B cell (primary cell): ENCODE measurements at regions of chr2 and their contacts with region 1.

Region 1: DNA sequence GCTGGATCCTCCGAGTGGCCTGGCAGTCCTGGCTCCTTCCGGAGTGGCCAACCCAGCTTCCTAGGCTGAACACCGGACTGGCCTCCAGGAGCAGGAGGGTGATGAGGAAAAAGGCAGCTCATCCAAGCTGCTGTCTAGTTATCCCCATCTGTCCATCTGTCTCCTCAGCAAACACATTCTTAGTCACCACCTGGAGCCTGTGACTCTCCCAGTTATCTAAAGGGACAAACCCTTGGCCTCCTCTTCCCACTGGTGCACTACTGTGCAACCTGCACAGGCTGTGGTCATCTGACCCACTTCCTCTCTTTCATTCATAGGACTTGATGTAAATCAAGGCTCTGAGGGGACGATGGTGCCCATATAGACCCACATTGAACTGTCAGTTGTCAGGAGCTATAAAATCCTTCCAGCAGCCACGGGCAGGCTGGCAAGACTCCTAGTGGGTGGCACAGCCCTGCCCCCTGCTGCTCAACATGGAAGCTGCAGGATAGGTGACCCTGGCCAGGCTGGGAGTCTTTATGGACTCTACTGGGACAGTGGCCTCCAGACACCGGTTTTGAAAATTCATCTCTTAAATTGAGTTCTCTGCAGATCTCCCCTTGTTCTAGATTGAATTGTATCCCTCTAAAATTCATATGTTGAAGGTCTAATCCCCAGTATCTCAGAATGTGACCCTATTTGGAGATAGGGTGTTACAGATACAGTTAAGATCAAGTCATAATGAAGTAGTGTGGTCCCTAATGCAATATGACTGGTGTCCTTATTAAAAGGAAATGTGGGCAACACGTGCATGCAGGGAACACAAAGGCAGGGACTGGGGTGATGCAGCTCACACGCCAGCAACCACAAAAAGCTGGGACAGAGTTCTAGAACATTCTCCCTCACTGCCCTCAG is 29.3 kb upstream of the DUSP2 start:
- DNase-seq: peak; percentile 85
- ATAC-seq: peak; percentile 99
- H3K4me3 ChIP-seq: no peak overlapping the region
- H3K4me3 Mint-ChIP-seq: no peak overlapping the region
- H3K27ac ChIP-seq: no peak overlapping the region
- H3K27ac Mint-ChIP-seq: no peak overlapping the region
- H3K4me1 ChIP-seq: peaks cover 0 to 3% of the 10 kb centered on the region in 2 donors
- H3K4me1 Mint-ChIP-seq: peaks cover 7% of the 10 kb centered on the region
- H3K27me3 ChIP-seq: no peaks in the 10 kb centered on the region
- H3K27me3 Mint-ChIP-seq: no peaks in the 10 kb centered on the region
- CTCF ChIP-seq: peak; percentile 99

Region 2: DNA sequence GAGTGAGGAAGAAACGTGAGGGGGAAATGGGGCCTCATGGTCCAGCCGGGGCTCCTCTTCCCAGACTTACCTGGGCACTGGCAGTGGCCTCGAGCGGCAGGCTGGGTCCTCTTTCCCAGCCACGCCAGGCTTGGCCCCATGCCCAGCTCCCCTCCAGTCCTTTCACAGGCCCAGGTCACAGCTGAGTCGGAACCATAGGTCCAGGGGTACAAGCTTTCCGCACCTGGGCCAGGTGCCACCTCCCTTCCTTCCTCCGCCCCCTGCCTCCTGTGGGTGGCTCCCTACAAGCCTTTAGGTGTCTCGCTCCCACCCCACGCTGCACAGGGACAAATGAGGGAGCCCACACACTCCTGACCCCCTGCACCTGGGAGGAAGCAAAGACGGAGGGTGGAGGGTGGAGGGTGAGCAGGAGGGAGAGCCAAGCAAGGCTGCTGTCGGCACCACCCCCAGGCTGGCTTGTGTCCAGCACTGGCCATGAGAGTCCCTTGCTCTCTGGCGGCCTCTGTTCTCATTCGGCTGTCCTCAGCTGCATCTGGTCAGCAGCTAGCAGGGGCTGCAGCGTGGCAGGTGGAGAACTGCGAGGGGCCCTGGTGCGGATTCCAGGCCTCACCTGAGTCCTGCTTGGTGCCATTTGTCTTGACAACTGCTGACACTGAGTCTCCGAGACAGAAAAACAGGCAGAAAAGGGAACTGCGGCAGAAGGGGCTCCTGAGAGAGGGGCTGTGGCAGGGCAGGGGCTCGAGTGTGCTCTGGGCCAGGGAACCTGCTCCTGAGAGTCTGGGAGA is 84.9 kb before region 1 on chr2:
- CTCF ChIA-PET with region 1: no interaction called
- POLR2A ChIA-PET with region 1: no interaction called
- intact Hi-C with region 1: no loop called
- DNase-seq: no peak
- ATAC-seq: no peak
- H3K4me3 ChIP-seq: no peak overlapping the region
- H3K4me3 Mint-ChIP-seq: no peak overlapping the region
- H3K27ac ChIP-seq: no peak overlapping the region
- H3K27ac Mint-ChIP-seq: no peak overlapping the region
- H3K4me1 ChIP-seq: no peaks in the 10 kb centered on the region
- H3K4me1 Mint-ChIP-seq: no peaks in the 10 kb centered on the region
- H3K27me3 ChIP-seq: peaks cover 0 to 8% (median 2%) of the 10 kb centered on the region in 4 experiments
- H3K27me3 Mint-ChIP-seq: peaks cover 21% of the 10 kb centered on the region
- CTCF ChIP-seq: no peak

Region 3: DNA sequence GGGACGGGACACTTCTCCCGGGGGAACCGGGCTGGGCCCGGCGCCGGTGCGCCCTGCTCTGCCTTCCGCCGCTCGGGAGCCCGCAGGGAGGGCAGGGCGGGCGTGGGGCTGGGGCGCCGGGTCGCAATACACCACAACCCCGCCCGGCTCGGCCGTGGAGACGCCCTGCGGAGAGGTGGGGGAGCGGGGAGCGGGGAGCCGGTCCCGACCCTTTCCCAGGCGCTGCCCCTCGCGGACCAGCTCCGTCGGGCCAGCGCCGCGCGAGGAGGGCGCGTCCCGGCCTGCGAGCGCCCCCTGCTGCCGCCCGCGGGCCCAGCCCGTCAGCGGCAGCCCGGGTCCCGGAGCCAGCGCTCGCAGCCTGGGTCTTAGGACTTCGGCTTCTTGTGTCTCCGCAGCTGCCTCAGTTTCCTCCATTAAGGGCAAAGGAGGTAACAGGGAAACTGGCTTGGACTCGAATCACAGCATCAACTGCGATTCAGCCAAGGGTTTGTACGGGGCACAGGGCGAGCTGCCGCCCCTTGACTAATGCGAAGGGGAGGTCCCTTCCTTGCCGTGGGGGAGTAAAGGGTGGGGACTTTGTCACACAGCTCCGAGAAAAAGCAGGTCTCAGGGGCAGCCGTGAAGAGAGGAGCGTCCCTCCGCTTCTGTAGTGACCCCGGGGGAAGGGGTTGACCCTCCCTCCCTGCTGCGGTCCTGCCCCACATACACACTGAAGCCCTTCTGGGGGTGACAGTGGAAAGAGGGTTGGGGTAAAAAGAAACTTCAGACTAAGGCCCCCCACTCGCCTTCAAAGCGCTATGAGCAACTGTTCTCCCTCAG is 57.4 kb before region 1 on chr2:
- CTCF ChIA-PET with region 1: interaction called, 27 read pairs
- POLR2A ChIA-PET with region 1: no interaction called
- intact Hi-C with region 1: no loop called
- DNase-seq: peak; percentile 82
- ATAC-seq: peak; percentile 79
- H3K4me3 ChIP-seq: peak overlapping the region in 4 of 5 experiments; percentile 19 to 61 (median 52)
- H3K4me3 Mint-ChIP-seq: peak overlapping the region; percentile 79
- H3K27ac ChIP-seq: no peak overlapping the region
- H3K27ac Mint-ChIP-seq: no peak overlapping the region
- H3K4me1 ChIP-seq: peaks cover 18 to 22% of the 10 kb centered on the region in 2 donors
- H3K4me1 Mint-ChIP-seq: peaks cover 26% of the 10 kb centered on the region
- H3K27me3 ChIP-seq: peaks cover 0 to 51% (median 11%) of the 10 kb centered on the region in 4 experiments
- H3K27me3 Mint-ChIP-seq: peaks cover 34% of the 10 kb centered on the region
- CTCF ChIP-seq: peak; percentile 92

Region 4: GRCh38 chr2:96138179-96139145 is 36.0 kb before region 1 on chr2 and contains the start of gene ASTL:
- CTCF ChIA-PET with region 1: interaction called, 1,065 read pairs
- POLR2A ChIA-PET with region 1: interaction called, 15 read pairs
- intact Hi-C with region 1: loop called (anchors 1 kb)
- DNase-seq: peak; percentile 81
- ATAC-seq: peak; percentile 63
- H3K4me3 ChIP-seq: no peak within 1 kb of the TSS
- H3K4me3 Mint-ChIP-seq: no peak within 1 kb of the TSS
- H3K27ac ChIP-seq: no peak within 1 kb of the TSS
- H3K27ac Mint-ChIP-seq: peak within 1 kb of the TSS; percentile 41
- H3K4me1 ChIP-seq: peaks cover 10 to 20% of the 10 kb centered on the region in 2 donors
- H3K4me1 Mint-ChIP-seq: peaks cover 27% of the 10 kb centered on the region
- H3K27me3 ChIP-seq: no peaks in the 10 kb centered on the region
- H3K27me3 Mint-ChIP-seq: no peaks in the 10 kb centered on the region
- CTCF ChIP-seq: peak; percentile 67
- total RNA-seq, gene ASTL: 0.41 and 0.59 TPM in 2 replicates

Region 5: DNA sequence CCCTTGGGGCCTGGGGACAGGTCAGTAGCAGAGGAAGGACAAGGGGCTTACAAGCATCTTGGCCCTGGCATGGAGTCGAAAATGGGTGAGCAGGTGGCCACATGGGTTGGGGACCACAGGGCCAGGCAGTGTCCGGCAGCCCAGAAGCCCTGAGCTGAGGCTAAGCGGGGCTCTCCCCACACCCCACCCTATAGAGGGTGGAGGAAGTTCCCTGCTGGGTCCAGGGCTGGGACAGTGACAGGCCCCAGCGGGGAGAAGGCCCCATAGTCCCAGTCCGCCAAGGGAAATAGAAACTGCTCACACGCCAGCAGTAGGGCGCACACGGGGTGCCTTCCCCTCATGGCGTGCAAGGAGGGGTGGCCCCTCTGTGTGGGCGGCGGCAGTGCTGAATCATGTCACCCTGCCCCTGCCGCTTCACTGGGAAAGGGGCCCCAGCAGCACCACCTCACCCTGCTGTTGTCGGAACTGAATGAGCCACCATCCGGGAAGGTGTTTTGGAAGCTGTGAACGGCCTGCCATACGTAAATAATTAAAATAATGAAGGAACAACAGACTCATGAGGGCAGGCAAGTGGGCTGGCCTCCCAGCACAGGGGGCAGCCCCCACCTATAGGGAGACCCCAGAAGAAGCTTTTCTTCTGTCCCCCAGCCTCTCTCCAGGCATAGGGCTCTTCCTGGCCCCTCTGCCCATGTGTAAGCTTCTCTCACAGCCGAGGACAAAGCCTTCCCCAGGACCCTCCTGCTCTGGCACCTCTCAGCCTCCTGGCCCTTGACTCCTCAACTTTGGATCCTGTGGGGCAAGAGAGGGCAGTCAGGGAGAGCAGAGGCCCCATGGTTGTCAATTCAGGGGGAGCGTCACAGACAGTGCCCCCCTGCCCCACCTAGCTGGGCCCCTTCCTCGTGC is 16.6 kb before region 1 on chr2:
- CTCF ChIA-PET with region 1: interaction called, 1,065 read pairs
- POLR2A ChIA-PET with region 1: interaction called, 8 read pairs
- intact Hi-C with region 1: loop called (anchors 2 kb)
- DNase-seq: peak; percentile 76
- ATAC-seq: peak; percentile 74
- H3K4me3 ChIP-seq: peak overlapping the region in 1 of 5 experiments; percentile 6
- H3K4me3 Mint-ChIP-seq: peak overlapping the region; percentile 77
- H3K27ac ChIP-seq: peak overlapping the region; percentile 42 to 44
- H3K27ac Mint-ChIP-seq: peak overlapping the region; percentile 81
- H3K4me1 ChIP-seq: peaks cover 49 to 59% of the 10 kb centered on the region in 2 donors
- H3K4me1 Mint-ChIP-seq: peaks cover 74% of the 10 kb centered on the region
- H3K27me3 ChIP-seq: no peaks in the 10 kb centered on the region
- H3K27me3 Mint-ChIP-seq: no peaks in the 10 kb centered on the region
- CTCF ChIP-seq: no peak

Region 6: DNA sequence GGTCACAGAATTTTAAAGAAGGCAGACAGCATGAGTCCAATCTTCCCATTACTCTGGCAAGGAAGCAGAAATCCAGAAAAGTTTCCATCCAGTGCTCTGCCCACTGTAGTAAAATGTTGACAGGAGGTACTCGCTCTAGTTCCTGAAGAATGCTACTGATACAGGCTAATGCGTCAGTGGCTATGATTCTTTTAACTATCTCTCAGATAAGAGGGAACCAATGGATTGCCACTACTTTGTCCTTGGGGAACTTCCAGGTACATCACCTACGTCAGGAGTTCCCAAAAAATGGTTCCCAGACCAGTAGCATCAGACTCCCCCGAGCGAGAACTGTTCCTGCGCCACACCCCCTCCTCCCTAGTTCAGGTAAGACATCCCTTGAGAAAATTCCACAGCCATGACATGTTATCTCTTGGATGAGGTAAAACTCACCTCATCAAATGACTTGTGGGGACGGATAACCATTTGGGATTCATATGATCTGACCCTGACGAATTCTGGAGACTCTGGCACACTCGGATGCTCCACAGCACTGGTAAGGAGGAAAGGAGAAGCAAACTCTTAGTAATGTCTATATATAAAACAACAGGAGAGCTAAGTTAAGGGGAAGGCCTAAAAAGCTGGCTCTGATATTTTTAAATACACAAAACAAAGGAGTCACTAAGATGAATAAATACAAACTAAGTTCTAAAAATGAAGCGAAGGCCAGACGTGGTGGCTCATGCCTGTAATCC is 17.6 kb after region 1 on chr2:
- CTCF ChIA-PET with region 1: interaction called, 13 read pairs
- POLR2A ChIA-PET with region 1: no interaction called
- intact Hi-C with region 1: no loop called
- DNase-seq: no peak
- ATAC-seq: no peak
- H3K4me3 ChIP-seq: no peak overlapping the region
- H3K4me3 Mint-ChIP-seq: no peak overlapping the region
- H3K27ac ChIP-seq: no peak overlapping the region
- H3K27ac Mint-ChIP-seq: no peak overlapping the region
- H3K4me1 ChIP-seq: no peaks in the 10 kb centered on the region
- H3K4me1 Mint-ChIP-seq: peaks cover 7% of the 10 kb centered on the region
- H3K27me3 ChIP-seq: no peaks in the 10 kb centered on the region
- H3K27me3 Mint-ChIP-seq: no peaks in the 10 kb centered on the region
- CTCF ChIP-seq: no peak

Region 7: GRCh38 chr2:96233880-96234316 is 59.4 kb after region 1 on chr2:
- CTCF ChIA-PET with region 1: interaction called, 25 read pairs
- POLR2A ChIA-PET with region 1: no interaction called
- intact Hi-C with region 1: no loop called
- DNase-seq: peak; percentile 70
- ATAC-seq: peak; percentile 98
- H3K4me3 ChIP-seq: no peak overlapping the region
- H3K4me3 Mint-ChIP-seq: peak overlapping the region; percentile 49
- H3K27ac ChIP-seq: no peak overlapping the region
- H3K27ac Mint-ChIP-seq: peak overlapping the region; percentile 88
- H3K4me1 ChIP-seq: peaks cover 15% of the 10 kb centered on the region in 2 donors
- H3K4me1 Mint-ChIP-seq: peaks cover 16% of the 10 kb centered on the region
- H3K27me3 ChIP-seq: no peaks in the 10 kb centered on the region
- H3K27me3 Mint-ChIP-seq: no peaks in the 10 kb centered on the region
- CTCF ChIP-seq: peak; percentile 41

Region 8: GRCh38 chr2:96265840-96266679 is 91.6 kb after region 1 on chr2 and contains the starts of genes CIAO1 and TMEM127:
- CTCF ChIA-PET with region 1: interaction called, 30 read pairs
- POLR2A ChIA-PET with region 1: no interaction called
- intact Hi-C with region 1: no loop called
- DNase-seq: peak; percentile 97
- ATAC-seq: peak; percentile 93
- H3K4me3 ChIP-seq: peak within 1 kb of the TSS; percentile 93 to 97 (median 95)
- H3K4me3 Mint-ChIP-seq: peak within 1 kb of the TSS; percentile 99
- H3K27ac ChIP-seq: peak within 1 kb of the TSS; percentile 82 to 85
- H3K27ac Mint-ChIP-seq: peak within 1 kb of the TSS; percentile 94
- H3K4me1 ChIP-seq: peaks cover 23 to 34% of the 10 kb centered on the region in 2 donors
- H3K4me1 Mint-ChIP-seq: peaks cover 45% of the 10 kb centered on the region
- H3K27me3 ChIP-seq: no peaks in the 10 kb centered on the region
- H3K27me3 Mint-ChIP-seq: no peaks in the 10 kb centered on the region
- CTCF ChIP-seq: peak; percentile 22
- total RNA-seq, gene CIAO1: 85.4 and 91.2 TPM in 2 replicates
- total RNA-seq, gene TMEM127: 48.0 and 48.5 TPM in 2 replicates